Posterior vena cava (tissue), 2 donors: ENCODE measurements at regions of chr21 and their contacts with region 1.

Region 1: GRCh38 chr21:16588433-16588860 is 858.7 kb downstream of the USP25 start:
- DNase-seq: peak; percentile 86

Region 2: GRCh38 chr21:16534408-16535101 is 53.9 kb before region 1 on chr21:
- intact Hi-C with region 1: loop called in 1 of 2 experiments (anchors 10 kb)
- DNase-seq: peak; percentile 87